ENCODE measurements at regions of chr4 and their contacts with region 1.

Region 1: GRCh38 chr4:159175085-159175988 is 72.5 kb downstream of the RAPGEF2 start:
- DNase-seq: peak; percentile 93
- H3K4me3 ChIP-seq: peak overlapping the region in 1 of 3 experiments; percentile 72
- H3K27ac ChIP-seq: peak overlapping the region; percentile 63
- H3K4me1 ChIP-seq: peaks cover 42% of the 10 kb centered on the region
- H3K27me3 ChIP-seq: no peaks in the 10 kb centered on the region
- CTCF ChIP-seq: peak; percentile 60 to 62
- POLR2A ChIP-seq: peak; percentile 27

Region 2: DNA sequence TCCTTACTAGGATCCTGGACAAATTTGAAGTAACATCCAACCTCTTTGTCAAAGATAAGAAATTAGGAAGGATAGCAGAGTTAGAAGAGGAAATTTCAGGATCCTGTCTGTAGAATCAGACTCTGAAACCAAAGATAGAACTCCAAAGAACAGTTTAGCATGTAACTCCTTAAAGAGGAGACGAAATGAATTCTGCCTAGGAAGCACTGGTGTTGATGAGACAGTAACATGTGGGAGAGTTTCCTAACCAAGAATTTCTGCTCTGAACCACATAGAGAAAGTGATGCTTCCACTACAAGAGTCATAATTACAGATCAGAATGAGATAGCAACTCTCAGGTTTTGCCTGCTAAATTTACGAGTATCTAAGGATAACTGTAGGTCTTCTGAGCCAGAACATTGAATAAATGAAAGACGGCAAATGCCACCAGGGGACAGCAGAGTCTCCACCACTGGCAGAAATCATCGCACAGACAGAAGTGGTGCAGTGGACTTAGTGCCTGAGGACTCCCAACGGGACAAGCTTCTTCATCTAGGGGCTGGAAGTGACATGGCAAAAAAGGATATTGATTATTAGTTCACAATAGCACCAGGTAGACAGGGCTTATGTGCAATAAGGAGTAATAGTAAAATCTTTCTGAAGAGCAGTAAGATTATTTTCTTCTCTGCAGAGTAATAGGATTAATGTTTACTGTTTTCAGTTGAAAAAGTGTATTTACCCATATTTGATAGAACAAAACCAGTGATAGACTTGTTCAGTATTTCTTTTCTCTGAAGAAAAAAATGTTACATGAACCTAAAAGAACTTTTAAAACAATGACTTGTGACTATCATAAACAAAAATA is 445.4 kb before region 1 on chr4:
- CTCF ChIA-PET with region 1: interaction called, 4 read pairs
- POLR2A ChIA-PET with region 1: no interaction called
- dilution Hi-C with region 1: no loop called
- intact Hi-C with region 1: loop called (anchors 1 kb)
- DNase-seq: peak; percentile 84
- H3K4me3 ChIP-seq: no peak overlapping the region
- H3K27ac ChIP-seq: no peak overlapping the region
- H3K4me1 ChIP-seq: no peaks in the 10 kb centered on the region
- H3K27me3 ChIP-seq: peaks cover 9 to 14% of the 10 kb centered on the region in 2 experiments
- CTCF ChIP-seq: peak; percentile 71 to 78
- POLR2A ChIP-seq: no peak

Region 3: DNA sequence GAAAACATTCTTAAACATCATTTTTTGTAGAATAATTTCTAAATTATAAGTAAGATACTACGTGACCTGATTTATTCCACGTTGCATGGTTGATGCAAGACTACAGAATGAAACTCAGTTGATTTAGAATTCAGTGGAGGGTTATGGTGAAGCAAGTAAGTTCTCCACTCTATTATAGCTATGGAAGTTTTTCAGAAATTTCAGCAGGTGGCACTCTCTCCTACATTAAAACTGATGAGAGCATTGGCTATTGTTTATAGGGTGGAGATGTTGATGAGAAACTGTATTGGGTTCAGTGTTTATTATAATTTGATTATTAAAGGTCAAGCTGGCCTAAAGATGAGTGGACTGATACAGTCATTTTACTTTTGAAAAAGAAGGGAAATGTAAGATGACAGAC is 318.5 kb before region 1 on chr4:
- CTCF ChIA-PET with region 1: interaction called, 33 read pairs
- POLR2A ChIA-PET with region 1: no interaction called
- dilution Hi-C with region 1: no loop called
- intact Hi-C with region 1: loop called (anchors 1 kb)
- DNase-seq: peak; percentile 70
- H3K4me3 ChIP-seq: no peak overlapping the region
- H3K27ac ChIP-seq: no peak overlapping the region
- H3K4me1 ChIP-seq: no peaks in the 10 kb centered on the region
- H3K27me3 ChIP-seq: no peaks in the 10 kb centered on the region
- CTCF ChIP-seq: peak; percentile 19 to 43
- POLR2A ChIP-seq: no peak

Region 4: DNA sequence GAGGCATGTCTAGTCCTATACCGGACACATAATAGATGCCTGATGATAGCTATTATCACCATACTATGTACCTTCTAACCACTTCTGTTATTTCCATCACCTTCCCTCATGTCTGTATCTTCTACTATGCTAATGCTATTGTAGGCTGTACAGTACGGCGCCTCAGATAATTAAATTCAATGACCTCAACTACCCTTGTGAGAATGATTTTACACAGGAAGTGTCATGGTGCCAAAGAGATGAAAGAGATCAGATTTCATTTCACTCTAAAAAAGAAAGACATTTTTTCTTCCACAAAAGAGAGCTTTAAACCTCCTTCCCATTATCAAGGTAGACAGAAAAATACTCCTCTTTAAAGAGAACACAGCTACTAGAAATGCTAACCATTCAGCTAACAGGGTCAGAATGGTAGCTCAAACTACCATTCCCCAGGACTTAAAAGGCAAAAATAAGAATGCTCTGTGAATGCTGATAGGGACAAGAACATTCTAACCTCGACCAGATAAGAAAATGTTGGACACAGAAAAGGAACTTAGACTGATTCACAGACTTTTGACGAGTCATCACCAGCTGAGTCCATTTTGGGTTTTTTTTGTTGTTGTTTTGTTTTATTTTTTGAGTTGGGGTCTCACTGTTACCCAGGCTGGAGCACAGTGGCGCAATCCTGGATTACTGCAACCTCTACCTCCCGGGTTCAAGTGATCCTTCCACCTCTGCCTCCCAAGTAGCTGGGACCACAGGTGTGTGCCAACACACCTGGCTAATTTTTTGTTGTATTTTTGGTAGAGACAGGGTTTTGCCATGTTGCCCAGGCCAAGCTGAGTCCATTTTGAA is 171.7 kb before region 1 on chr4:
- CTCF ChIA-PET with region 1: no interaction called
- POLR2A ChIA-PET with region 1: no interaction called
- dilution Hi-C with region 1: no loop called
- intact Hi-C with region 1: loop called (anchors 2 kb)
- DNase-seq: peak; percentile 81
- H3K4me3 ChIP-seq: peak overlapping the region in 1 of 3 experiments; percentile 49
- H3K27ac ChIP-seq: peak overlapping the region; percentile 94
- H3K4me1 ChIP-seq: peaks cover 21% of the 10 kb centered on the region
- H3K27me3 ChIP-seq: no peaks in the 10 kb centered on the region
- CTCF ChIP-seq: no peak
- POLR2A ChIP-seq: no peak

Region 5: DNA sequence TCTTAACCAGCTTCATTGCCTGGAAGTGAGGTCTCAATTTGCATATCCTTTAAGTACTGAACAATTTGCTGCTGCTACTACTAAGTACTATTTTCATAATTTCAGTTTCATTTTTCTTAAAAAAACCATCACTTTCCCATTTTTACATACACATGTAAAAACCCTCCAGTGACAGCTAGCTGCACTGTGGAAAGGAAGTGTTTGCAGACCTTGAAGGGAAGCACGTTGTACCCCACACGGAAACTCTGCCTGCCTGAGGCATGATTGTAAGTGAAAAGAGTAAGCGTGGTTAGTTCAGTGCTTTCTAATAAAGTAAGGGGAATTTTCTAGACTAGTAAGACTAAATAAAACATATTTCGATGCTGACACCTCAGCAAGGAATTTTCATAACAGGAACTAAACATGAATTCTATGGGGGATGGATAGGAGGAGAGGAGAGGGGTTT is 31.1 kb after region 1 on chr4:
- CTCF ChIA-PET with region 1: interaction called, 9 read pairs
- POLR2A ChIA-PET with region 1: no interaction called
- dilution Hi-C with region 1: no loop called
- intact Hi-C with region 1: loop called (anchors 1 kb)
- DNase-seq: peak; percentile 73
- H3K4me3 ChIP-seq: no peak overlapping the region
- H3K27ac ChIP-seq: no peak overlapping the region
- H3K4me1 ChIP-seq: peaks cover 27% of the 10 kb centered on the region
- H3K27me3 ChIP-seq: no peaks in the 10 kb centered on the region
- CTCF ChIP-seq: no peak
- POLR2A ChIP-seq: no peak

Measured in endothelial cell of umbilical vein (primary cell).